Activated CD4-positive, alpha-beta memory T cell treated with anti-CD3 and anti-CD28 coated beads for 36 hours (primary cell): ENCODE measurements at regions of chr5 and their contacts with region 1.

Region 1: GRCh38 chr5:773517-774264 is 10.8 kb downstream of the ZDHHC11B start:
- DNase-seq: peak; percentile 8
- H3K4me3 Mint-ChIP-seq: no peak overlapping the region
- H3K27ac Mint-ChIP-seq: no peak overlapping the region
- H3K4me1 Mint-ChIP-seq: no peaks in the 10 kb centered on the region
- H3K27me3 Mint-ChIP-seq: no peaks in the 10 kb centered on the region

Region 2: DNA sequence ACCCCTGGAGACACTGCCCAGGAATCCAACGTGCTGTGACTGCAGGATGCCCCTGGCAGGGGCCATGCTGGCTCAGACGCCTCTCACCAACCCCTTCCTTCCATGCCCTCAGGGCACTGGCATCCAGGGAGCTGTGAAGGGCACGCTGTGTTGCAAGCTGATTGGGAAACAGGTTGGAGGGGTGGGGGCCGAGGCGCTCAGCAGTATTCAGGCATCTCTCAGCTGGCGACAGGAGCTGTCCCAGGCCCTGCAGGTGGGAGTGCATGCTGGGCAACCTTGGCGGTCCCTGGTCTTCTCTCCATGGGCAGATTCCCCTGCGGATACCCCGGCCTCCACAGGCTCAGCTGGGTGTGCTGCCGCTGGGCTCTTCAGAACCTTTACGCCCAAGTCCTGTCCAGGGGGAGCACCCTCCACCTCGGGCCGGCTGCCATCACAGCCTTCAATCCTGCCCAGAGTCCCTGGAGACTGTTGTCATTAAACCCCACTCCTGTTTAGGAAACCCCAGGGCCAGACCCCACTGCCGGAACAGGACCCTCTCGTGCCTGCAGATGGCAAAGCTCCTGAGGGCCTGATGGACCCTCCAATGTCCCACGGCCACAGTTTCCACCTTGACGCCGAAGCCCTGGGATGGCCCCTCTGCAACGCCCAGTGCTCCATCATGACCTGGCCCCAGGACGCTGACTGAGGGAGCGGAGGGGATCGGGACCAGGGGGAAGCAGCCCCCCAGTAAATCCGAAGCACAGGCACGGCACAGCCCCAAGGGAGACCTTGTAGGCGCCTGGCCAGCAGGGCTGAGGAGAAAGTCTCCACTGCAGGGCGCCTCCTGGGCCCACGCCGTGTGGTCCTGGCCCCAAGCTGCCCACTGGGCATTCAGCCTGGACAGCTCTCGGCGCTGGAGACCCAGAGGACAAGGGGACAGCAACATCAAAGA is 89.9 kb before region 1 on chr5:
- CTCF ChIA-PET with region 1: no interaction called
- POLR2A ChIA-PET with region 1: no interaction called
- intact Hi-C with region 1: loop called (anchors 2 kb)
- DNase-seq: no peak
- H3K4me3 Mint-ChIP-seq: no peak overlapping the region
- H3K27ac Mint-ChIP-seq: no peak overlapping the region
- H3K4me1 Mint-ChIP-seq: no peaks in the 10 kb centered on the region
- H3K27me3 Mint-ChIP-seq: no peaks in the 10 kb centered on the region

Region 3: GRCh38 chr5:1008451-1009358 is 235.0 kb after region 1 on chr5 and contains the start of gene NKD2:
- CTCF ChIA-PET with region 1: no interaction called
- POLR2A ChIA-PET with region 1: no interaction called
- intact Hi-C with region 1: no loop called
- DNase-seq: peak; percentile 42
- H3K4me3 Mint-ChIP-seq: peak within 1 kb of the TSS; percentile 47
- H3K27ac Mint-ChIP-seq: no peak within 1 kb of the TSS
- H3K4me1 Mint-ChIP-seq: peaks cover 13% of the 10 kb centered on the region
- H3K27me3 Mint-ChIP-seq: peaks cover 53% of the 10 kb centered on the region
- total RNA-seq, gene NKD2: 0.41 to 1.1 TPM